Colonic mucosa (tissue), 4 donors: ENCODE measurements at regions of chr10 and their contacts with region 1.

Region 1: DNA sequence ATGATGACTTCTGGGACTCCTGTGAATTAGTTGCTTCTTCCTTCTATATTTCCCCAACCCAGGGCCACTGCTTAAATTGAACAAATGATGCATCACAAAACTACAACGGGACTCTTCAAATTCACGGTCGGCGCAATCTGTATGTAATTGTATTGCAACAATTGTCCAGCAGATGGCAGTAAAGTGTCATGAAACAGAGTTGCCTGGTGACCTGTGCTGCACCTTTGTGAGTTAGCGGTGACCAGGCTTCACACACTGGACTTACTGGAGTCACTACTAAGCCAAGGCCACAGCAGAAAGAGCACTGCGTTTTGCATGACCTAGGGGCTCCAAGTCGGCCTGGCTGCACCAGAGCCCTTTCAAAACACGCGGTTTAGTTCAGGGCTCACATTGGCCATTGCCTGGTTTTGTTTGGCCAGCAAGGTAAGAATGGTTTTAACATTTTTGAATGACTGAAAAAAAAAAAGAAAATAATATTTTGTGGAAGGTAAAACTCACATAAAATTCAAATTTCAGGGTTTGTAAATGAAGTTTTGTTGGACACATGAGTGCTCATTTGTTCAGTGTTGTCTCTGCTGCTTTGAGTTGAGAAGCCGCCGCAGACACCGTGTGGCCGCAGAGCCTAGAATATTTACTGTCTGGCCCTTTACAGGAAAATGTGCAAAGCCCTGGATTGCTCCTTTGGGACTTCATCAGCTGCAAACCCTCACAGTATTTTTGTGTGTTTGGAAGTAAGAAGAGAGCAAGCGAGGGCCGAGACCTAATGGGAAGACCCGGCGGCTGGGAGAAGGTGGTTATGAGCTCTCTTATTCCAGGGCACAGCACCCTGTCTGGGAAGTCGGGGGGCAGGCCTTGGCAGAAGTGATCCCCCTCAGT is 23.2 kb upstream of the ZNF32 start:
- DNase-seq: peak; percentile 55
- H3K4me3 ChIP-seq: no peak overlapping the region
- H3K27ac ChIP-seq: no peak overlapping the region
- H3K4me1 ChIP-seq: no peaks in the 10 kb centered on the region
- H3K27me3 ChIP-seq: no peaks in the 10 kb centered on the region
- CTCF ChIP-seq: peak; percentile 61

Region 2: GRCh38 chr10:44310762-44311562 is 639.1 kb after region 1 on chr10:
- intact Hi-C with region 1: loop called (anchors 5 kb)
- DNase-seq: peak; percentile 79
- H3K4me3 ChIP-seq: peak overlapping the region; percentile 16
- H3K27ac ChIP-seq: no peak overlapping the region
- H3K4me1 ChIP-seq: peaks cover 6% of the 10 kb centered on the region
- H3K27me3 ChIP-seq: no peaks in the 10 kb centered on the region
- CTCF ChIP-seq: peak; percentile 81

Region 3: DNA sequence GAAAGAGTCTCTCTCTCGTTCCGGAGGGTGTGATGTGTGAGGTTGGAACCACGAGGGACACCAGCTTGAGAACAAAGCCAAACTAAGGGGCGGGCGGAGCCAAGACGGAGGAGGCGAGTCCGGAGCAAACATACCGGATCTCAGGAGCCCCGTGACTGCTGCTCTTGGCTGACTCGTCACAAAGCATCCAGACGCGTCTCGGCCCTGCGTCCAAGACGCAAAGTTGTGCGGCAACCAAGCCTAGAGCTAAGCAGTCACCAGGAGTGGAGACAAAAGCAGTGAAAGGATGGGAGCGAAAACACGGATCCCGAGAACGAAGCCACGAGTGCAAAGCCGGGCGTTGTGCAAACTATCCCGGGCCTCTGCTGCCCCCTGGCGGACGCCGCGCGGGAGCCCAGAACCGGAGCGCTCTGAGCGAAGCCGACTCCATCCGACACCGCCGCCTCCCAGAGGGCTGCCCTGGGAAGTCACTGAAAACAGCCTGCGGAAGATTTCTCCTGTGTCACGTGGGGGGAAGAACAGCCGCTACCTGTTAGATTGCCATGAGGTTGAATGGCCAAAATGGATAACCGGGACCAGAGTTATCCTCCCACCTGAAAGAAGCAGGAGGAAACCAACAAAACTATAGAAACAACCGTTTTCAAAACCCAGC is 1192.9 kb after region 1 on chr10:
- intact Hi-C with region 1: loop called (anchors 5 kb)
- DNase-seq: peak; percentile 96
- H3K4me3 ChIP-seq: peak overlapping the region; percentile 35
- H3K27ac ChIP-seq: no peak overlapping the region
- H3K4me1 ChIP-seq: peaks cover 2% of the 10 kb centered on the region
- H3K27me3 ChIP-seq: no peaks in the 10 kb centered on the region
- CTCF ChIP-seq: peak; percentile 98